ENCODE measurements at regions of chr1 and their contacts with region 1.

Region 1: GRCh38 chr1:39653546-39654031 is 14.1 kb upstream of the HEYL start:
- DNase-seq: peak; percentile 87
- ATAC-seq: peak; percentile 72

Region 2: GRCh38 chr1:39538588-39539465 is 114.8 kb before region 1 on chr1:
- intact Hi-C with region 1: no loop called
- DNase-seq: peak; percentile 72
- ATAC-seq: peak; percentile 89

Region 3: DNA sequence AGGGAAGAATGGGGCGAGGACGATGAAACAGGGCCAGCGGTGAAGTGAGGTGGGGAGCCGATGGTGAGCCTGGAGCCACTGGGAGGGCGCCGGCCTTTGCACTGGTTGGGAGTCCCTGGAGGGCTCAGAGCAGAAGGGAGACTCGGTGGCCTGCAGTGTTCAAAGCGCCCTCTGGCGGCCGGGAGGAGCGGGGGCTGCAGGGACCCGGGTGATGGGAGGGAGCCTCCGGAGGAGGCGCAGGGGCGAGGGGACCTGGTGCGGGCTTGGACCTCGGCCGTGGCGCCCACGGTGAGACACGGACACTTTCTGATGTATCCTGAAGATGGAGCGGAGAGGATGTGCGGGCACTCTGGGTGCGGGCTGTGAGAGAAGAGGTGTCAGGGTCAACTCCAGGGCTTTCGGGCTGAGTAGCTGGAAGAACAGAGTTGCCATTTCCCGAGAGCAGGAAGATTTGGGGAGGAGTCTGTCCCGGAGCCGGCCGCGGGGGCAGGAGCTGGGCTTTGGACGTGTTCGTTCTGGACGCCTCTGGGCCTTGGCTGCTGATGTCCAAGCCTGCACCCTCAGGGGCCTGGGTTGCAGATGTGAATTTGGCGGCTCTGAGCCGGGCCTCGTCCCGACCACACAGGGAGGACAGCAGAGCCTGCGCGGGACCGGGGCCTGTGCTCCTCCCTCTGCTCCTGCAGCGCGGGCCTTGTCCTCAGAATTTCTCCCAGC is 43.8 kb before region 1 on chr1:
- intact Hi-C with region 1: loop called (anchors 2 kb)
- DNase-seq: peak; percentile 89
- ATAC-seq: peak; percentile 86

Region 4: DNA sequence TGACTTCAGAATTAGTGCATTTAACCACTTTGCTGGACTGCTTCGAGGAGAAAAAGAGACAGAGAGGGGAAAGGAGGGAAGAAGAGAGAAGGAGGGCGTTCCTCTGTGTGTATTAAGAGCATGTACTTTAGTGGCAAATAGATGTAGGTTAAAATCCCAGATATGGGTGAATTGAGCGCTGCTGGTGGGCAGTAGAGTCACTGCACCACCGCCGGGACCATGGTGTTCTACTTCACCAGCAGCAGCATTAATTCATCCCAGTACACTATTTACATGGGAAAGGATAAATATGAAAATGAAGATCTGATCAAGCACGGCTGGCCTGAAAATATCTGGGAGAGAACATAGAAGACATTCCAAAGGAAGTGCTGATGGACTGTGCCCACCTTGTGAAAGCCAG is 64.2 kb after region 1 on chr1:
- intact Hi-C with region 1: loop called (anchors 5 kb)
- DNase-seq: no peak
- ATAC-seq: no peak